Tibial artery (tissue), 4 donors: ENCODE measurements at regions of chr14 and their contacts with region 1.

Region 1: DNA sequence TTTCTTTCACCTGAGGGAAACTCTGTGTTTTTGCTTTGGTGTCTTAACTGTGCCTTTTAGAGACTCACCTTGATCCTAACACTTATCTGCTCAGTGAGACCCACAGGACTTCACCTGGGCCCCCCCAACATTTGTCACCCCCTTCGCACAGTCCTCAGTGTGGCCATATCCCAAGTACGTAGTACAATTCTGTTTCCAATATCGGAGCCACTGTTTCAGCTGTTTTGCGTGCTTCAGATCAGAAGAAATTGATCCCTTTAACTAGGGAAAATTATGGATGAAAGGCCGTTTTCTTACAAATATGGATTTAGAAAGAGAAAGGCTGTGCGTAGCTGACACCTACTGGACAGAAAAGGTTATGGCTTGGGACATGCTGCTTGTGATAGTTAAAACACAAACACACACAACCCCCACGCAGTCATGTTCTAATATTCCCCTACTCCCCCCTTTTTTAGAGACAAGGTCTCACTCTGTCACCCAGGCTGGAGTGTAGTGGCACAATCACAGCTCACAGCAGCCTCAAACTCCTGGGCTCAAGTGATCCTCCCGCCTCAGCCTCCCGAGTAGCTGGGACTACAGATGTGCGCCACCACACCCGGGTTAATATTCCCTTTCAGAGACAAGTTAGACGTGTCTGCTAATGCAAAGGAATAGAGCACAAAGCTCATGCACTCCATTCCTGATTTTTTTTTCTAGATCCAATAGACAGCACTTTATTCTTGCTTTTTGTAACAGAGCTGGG is 3.6 kb upstream of the SLC7A8 start:
- DNase-seq: peak in 1 of 2 donors; percentile 49
- H3K4me3 ChIP-seq: no peak overlapping the region
- H3K27ac ChIP-seq: no peak overlapping the region
- H3K4me1 ChIP-seq: peaks cover 0 to 8% (median 1%) of the 10 kb centered on the region in 4 donors
- H3K27me3 ChIP-seq: no peaks in the 10 kb centered on the region
- CTCF ChIP-seq: peak; percentile 87 to 98

Region 2: DNA sequence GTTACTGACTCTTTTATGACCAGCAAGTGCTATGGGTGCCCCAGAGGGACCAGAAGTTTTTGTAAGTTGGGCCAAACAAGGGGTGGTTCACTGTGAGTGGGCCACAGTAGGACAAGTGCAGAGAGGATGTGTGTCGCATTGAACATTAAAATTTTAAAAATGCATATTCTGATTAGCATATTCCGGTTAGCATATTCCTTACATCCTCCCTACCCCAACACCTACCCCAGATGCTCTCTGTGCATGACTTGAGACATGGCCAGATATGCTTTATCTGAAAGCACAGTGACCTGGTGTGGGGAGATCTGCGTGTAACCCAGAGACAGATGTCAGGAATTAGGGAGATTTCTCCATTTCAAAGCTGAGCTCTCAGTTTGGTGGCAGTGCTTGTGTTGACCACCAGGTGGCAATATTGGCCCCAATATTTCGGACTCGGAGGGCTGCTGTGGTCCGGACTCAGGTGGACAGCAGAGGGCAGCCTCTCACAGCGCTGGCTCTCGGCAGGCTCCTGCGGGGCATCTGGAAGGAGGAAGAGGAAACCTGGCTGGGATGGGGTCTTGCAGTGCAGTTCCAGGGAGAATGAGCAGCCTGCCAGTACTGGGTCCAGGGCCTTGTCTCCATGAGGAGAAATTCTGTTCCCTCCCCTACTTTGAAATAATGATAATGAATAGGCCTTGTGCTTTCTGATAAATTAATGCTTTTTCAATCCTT is 66.4 kb before region 1 on chr14:
- intact Hi-C with region 1: loop called (anchors 1 kb)
- DNase-seq: peak; percentile 91 to 93
- H3K4me3 ChIP-seq: no peak overlapping the region
- H3K27ac ChIP-seq: peak overlapping the region; percentile 46 to 54
- H3K4me1 ChIP-seq: peaks cover 3 to 35% (median 26%) of the 10 kb centered on the region in 4 donors
- H3K27me3 ChIP-seq: peaks cover 0 to 9% of the 10 kb centered on the region in 2 donors
- CTCF ChIP-seq: peak; percentile 100

Region 3: DNA sequence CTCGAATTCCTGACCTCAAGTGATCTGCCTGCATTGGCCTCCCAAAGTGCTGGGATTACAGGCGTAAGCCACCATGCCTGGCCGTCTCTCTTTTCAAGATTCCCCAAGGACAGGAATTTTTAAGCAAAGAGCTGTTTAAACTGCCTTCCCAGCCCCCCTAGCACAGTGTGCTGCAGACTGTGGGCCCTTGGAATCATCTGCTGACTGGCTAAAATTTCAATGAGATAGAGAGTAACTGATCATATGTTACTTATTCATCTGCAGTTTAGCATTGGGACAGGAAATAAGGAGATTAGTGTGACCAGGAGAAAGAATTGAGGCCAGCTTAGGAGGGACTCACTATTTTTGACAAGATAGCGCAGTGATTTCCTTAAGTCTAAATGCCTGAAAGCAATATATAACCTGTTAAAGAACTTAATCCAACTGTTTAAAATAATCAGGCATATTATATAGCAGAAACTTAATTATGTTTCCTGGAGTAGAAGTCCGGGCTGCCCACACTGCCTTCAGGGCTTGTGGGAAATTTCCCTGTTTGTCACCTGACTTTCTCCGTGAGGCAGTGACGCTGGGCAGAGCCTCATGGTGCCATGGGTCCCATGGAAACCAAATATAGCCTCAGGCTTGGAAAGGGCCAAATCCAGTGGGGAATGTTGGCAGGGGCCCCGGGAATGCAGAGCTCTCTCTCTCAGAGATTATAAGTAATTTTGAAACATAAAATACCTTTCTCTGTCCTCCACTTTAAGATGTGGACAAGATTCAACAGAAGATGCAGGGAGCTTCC is 45.2 kb before region 1 on chr14:
- intact Hi-C with region 1: loop called (anchors 1 kb)
- DNase-seq: peak; percentile 77 to 94
- H3K4me3 ChIP-seq: no peak overlapping the region
- H3K27ac ChIP-seq: peak overlapping the region; percentile 77 to 91
- H3K4me1 ChIP-seq: peaks cover 0 to 54% (median 34%) of the 10 kb centered on the region in 4 donors
- H3K27me3 ChIP-seq: no peaks in the 10 kb centered on the region
- CTCF ChIP-seq: no peak

Region 4: GRCh38 chr14:23294734-23295561 is 107.9 kb after region 1 on chr14:
- intact Hi-C with region 1: loop called (anchors 10 kb)
- DNase-seq: no peak
- H3K4me3 ChIP-seq: no peak overlapping the region
- H3K27ac ChIP-seq: no peak overlapping the region
- H3K4me1 ChIP-seq: peaks cover 0 to 21% (median 10%) of the 10 kb centered on the region in 4 donors
- H3K27me3 ChIP-seq: peaks cover 0 to 8% of the 10 kb centered on the region in 2 donors
- CTCF ChIP-seq: peak; percentile 66 to 88

Region 5: GRCh38 chr14:23387916-23388882 is 201.1 kb after region 1 on chr14:
- intact Hi-C with region 1: no loop called
- DNase-seq: no peak
- H3K4me3 ChIP-seq: no peak overlapping the region
- H3K27ac ChIP-seq: no peak overlapping the region
- H3K4me1 ChIP-seq: no peaks in the 10 kb centered on the region
- H3K27me3 ChIP-seq: peaks cover 0 to 19% of the 10 kb centered on the region in 2 donors
- CTCF ChIP-seq: no peak